HEK293T (cell line): ENCODE measurements at regions of chr7 and their contacts with region 1.

Region 1: DNA sequence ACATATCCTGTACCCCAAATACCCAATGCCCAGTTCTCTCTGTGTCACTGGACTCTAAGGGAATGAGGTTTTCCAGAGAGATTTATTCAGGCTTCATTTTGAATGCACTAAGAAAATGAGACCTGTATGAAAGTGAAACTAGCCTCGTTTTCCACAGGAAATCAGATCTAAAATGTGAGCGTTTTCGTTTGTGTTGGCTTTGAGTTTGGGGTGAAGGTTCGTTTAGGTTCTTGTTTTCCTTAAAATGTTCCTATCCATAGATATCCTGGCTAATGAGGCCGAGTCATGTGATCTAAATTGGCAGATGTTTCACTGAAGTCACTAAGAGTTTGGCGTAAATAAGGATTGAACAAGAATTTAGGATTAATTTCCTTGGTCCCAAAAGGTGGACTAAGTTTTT is 90.9 kb upstream of the BMPER start:
- DNase-seq: no peak

Region 2: DNA sequence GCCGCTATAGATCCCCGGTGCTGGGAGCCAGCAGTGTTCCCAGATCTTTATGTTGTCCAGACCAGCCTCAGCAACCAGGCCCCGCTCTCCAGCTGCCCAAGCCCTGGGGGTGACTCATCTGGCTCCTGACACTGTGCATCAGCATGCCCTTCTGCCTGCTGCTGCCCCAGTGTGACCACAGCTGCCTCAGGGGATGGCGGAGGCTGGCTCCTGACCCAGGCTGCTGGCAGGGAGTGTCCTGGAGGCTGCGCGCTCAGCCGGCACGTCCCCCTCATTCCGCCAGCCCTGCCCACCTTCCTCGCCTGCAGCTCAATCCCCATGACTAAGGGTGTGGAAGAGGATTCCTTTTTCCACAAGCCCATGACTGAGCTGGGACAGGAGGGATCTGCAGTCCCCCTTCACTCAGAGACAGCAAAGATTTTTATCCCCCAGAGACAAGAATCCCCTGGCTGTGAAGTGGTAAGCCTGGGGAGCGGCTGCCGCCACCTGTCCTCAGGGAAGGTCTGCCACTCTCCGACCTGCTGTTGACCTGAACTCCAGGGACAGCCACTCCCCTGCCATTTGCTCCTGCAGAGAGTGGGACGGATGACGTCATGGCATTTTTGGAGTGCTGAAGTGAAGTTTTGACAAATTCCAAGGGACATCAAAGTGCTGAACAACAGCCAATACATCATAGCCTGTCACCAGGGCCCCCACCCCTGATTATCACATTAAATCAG is 91.9 kb before region 1 on chr7:
- CTCF ChIA-PET with region 1: no interaction called
- POLR2A ChIA-PET with region 1: interaction called, 10 read pairs
- DNase-seq: peak; percentile 58

Region 3: GRCh38 chr7:33798686-33799325 is 15.6 kb before region 1 on chr7:
- CTCF ChIA-PET with region 1: no interaction called
- POLR2A ChIA-PET with region 1: no interaction called
- DNase-seq: no peak

Region 4: GRCh38 chr7:33854801-33855350 is 40.5 kb after region 1 on chr7:
- CTCF ChIA-PET with region 1: no interaction called
- POLR2A ChIA-PET with region 1: no interaction called
- DNase-seq: no peak